ENCODE measurements at regions of chr1 and their contacts with region 1.

Region 1: GRCh38 chr1:184805667-184806295 is 51.1 kb upstream of the EDEM3 start:
- DNase-seq: peak; percentile 90
- H3K4me3 Mint-ChIP-seq: no peak overlapping the region
- H3K27ac Mint-ChIP-seq: peak overlapping the region; percentile 6
- H3K4me1 Mint-ChIP-seq: peaks cover 2% of the 10 kb centered on the region
- H3K27me3 Mint-ChIP-seq: no peaks in the 10 kb centered on the region

Region 2: GRCh38 chr1:184649451-184649888 is 156.3 kb before region 1 on chr1:
- CTCF ChIA-PET with region 1: no interaction called
- intact Hi-C with region 1: no loop called
- DNase-seq: no peak
- H3K4me3 Mint-ChIP-seq: no peak overlapping the region
- H3K27ac Mint-ChIP-seq: no peak overlapping the region
- H3K4me1 Mint-ChIP-seq: no peaks in the 10 kb centered on the region
- H3K27me3 Mint-ChIP-seq: peaks cover 17% of the 10 kb centered on the region

Region 3: GRCh38 chr1:185170291-185170848 is 364.6 kb after region 1 on chr1:
- CTCF ChIA-PET with region 1: interaction called, 15 read pairs
- intact Hi-C with region 1: loop called (anchors 1 kb)
- DNase-seq: peak; percentile 60
- H3K4me3 Mint-ChIP-seq: no peak overlapping the region
- H3K27ac Mint-ChIP-seq: peak overlapping the region; percentile 46
- H3K4me1 Mint-ChIP-seq: peaks cover 3% of the 10 kb centered on the region
- H3K27me3 Mint-ChIP-seq: no peaks in the 10 kb centered on the region

Measured in activated naive CD4-positive, alpha-beta T cell treated with anti-CD3 and anti-CD28 coated beads for 36 hours (primary cell).